OCI-LY7 (cell line): ENCODE measurements at regions of chrX and their contacts with region 1.

Region 1: GRCh38 chrX:9414416-9414815 is 50.4 kb upstream of the TBL1X start:
- DNase-seq: no peak
- H3K4me3 ChIP-seq: no peak overlapping the region
- H3K27ac ChIP-seq: no peak overlapping the region
- H3K4me1 ChIP-seq: no peaks in the 10 kb centered on the region
- CTCF ChIP-seq: no peak

Region 2: GRCh38 chrX:9698576-9698975 is 284.2 kb after region 1 on chrX:
- CTCF ChIA-PET with region 1: no interaction called
- POLR2A ChIA-PET with region 1: no interaction called
- intact Hi-C with region 1: loop called (anchors 5 kb)
- DNase-seq: no peak
- H3K4me3 ChIP-seq: no peak overlapping the region
- H3K27ac ChIP-seq: no peak overlapping the region
- H3K4me1 ChIP-seq: no peaks in the 10 kb centered on the region
- CTCF ChIP-seq: no peak